B cell (primary cell): ENCODE measurements at regions of chr6 and their contacts with region 1.

Region 1: GRCh38 chr6:83199863-83200225 is 6.7 kb downstream of the RWDD2A start:
- DNase-seq: no peak
- ATAC-seq: no peak
- H3K4me3 ChIP-seq: no peak overlapping the region
- H3K4me3 Mint-ChIP-seq: no peak overlapping the region
- H3K27ac ChIP-seq: no peak overlapping the region
- H3K27ac Mint-ChIP-seq: no peak overlapping the region
- H3K4me1 ChIP-seq: peaks cover 6 to 10% of the 10 kb centered on the region in 2 donors
- H3K4me1 Mint-ChIP-seq: peaks cover 24% of the 10 kb centered on the region
- H3K27me3 ChIP-seq: no peaks in the 10 kb centered on the region
- H3K27me3 Mint-ChIP-seq: no peaks in the 10 kb centered on the region
- CTCF ChIP-seq: no peak

Region 2: DNA sequence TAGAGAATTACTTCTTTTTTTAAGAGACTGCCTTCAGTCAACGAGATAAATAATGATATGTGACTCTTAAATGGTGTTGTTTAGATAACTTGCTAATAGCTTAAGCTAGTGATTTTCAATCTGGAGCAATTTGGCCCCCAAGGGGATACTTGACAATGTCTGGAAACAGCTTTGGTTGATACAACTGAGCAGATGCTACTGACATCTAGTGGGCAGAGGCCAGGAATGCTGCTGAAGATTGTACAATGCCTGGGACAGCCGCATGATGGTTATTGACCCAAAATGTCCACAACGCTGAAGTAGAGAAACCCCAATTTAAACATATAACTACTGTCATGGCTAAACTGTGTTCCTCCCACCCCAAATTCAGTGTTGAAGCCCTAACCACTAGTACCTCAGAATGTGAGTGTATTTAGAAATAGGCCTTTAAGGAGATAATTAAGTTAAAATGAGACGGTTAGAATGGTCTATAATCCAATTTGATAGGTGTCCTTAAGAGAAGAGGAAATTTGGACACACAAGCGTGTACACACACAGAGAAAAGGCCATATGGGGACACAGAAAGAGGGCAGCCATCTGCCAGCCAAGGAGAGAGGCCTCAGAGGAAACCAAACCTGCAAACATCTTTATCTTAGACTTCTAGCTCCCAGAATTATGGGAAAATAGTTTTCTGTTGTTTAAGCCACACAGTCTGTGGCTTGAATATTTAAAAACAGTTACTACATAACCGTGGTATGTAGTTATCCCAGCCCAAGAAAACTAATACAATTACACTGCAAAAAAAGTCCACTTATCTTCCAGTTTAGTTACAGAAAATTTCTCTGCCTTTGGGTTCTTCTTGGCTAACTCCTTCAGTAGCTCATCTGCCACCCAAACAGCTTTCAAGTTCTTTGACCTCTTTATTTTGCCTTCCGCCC is 15.5 kb after region 1 on chr6:
- CTCF ChIA-PET with region 1: interaction called, 11 read pairs
- POLR2A ChIA-PET with region 1: no interaction called
- intact Hi-C with region 1: no loop called
- DNase-seq: peak; percentile 72
- ATAC-seq: peak; percentile 98
- H3K4me3 ChIP-seq: no peak overlapping the region
- H3K4me3 Mint-ChIP-seq: no peak overlapping the region
- H3K27ac ChIP-seq: no peak overlapping the region
- H3K27ac Mint-ChIP-seq: no peak overlapping the region
- H3K4me1 ChIP-seq: no peaks in the 10 kb centered on the region
- H3K4me1 Mint-ChIP-seq: no peaks in the 10 kb centered on the region
- H3K27me3 ChIP-seq: peaks cover 0 to 15% (median 0%) of the 10 kb centered on the region in 4 experiments
- H3K27me3 Mint-ChIP-seq: peaks cover 17% of the 10 kb centered on the region
- CTCF ChIP-seq: peak; percentile 81